CD4-positive, alpha-beta memory T cell (primary cell): ENCODE measurements at regions of chr1 and their contacts with region 1.

Region 1: DNA sequence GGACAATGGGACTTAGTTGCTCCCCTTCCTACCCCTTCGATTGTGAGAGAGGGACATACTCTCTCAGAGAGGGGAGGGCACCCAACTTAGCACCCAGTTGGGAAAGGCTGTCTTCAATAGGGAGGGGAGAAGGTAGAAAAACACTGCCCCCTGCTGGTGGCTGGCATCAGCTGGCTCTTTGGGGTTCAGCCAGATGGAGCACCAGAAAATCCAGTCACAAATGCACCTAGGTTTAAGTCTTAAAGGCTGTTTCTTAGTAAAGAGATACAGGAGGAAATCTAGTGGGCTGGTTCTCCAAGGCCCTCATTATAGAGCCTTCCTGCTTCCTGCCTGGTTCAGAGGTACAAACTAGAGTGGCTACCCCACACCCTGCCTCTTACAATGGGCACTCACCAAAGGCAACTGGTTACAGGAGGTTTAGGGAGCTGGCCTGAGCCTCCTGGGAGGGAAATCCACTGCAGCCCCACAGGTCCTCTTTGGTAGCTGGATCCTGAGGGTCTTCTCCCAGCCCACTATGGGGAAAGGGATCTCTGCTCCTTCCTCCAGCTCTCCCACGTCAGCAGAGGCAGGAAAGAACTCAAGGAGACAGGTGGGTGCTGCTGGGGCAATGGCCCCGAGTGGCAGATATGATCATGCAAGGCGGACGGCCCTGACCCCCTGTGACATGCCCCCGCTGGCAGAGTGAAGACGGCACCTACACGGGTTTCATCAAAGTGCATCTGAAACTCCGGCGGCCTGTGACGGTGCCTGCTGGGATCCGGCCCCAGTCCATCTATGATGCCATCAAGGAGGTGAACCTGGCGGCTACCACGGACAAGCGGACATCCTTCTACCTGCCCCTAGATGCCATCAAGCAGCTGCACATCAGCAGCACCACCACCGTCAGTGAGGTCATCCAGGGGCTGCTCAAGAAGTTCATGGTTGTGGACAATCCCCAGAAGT is 28.3 kb downstream of the EIF2D start:
- DNase-seq: peak; percentile 78 to 86 (median 82)
- H3K4me3 ChIP-seq: no peak overlapping the region
- H3K4me3 Mint-ChIP-seq: peak overlapping the region; percentile 71 to 92 (median 84)
- H3K27ac ChIP-seq: peak overlapping the region; percentile 89
- H3K27ac Mint-ChIP-seq: peak overlapping the region; percentile 93 to 99 (median 97)
- H3K4me1 ChIP-seq: peaks cover 68% of the 10 kb centered on the region
- H3K4me1 Mint-ChIP-seq: peaks cover 52 to 78% (median 59%) of the 10 kb centered on the region in 4 donors
- H3K27me3 ChIP-seq: no peaks in the 10 kb centered on the region
- H3K27me3 Mint-ChIP-seq: no peaks in the 10 kb centered on the region

Region 2: GRCh38 chr1:206461602-206462455 is 122.1 kb before region 1 on chr1:
- CTCF ChIA-PET with region 1: interaction called, 15 read pairs
- POLR2A ChIA-PET with region 1: interaction called, 4 read pairs
- intact Hi-C with region 1: loop called (anchors 1 kb)
- DNase-seq: peak; percentile 62 to 72 (median 65)
- H3K4me3 ChIP-seq: no peak overlapping the region
- H3K4me3 Mint-ChIP-seq: no peak overlapping the region
- H3K27ac ChIP-seq: no peak overlapping the region
- H3K27ac Mint-ChIP-seq: peak overlapping the region in 4 of 7 donors; percentile 13 to 77 (median 16)
- H3K4me1 ChIP-seq: peaks cover 36% of the 10 kb centered on the region
- H3K4me1 Mint-ChIP-seq: peaks cover 21 to 49% (median 36%) of the 10 kb centered on the region in 4 donors
- H3K27me3 ChIP-seq: no peaks in the 10 kb centered on the region
- H3K27me3 Mint-ChIP-seq: no peaks in the 10 kb centered on the region

Region 3: DNA sequence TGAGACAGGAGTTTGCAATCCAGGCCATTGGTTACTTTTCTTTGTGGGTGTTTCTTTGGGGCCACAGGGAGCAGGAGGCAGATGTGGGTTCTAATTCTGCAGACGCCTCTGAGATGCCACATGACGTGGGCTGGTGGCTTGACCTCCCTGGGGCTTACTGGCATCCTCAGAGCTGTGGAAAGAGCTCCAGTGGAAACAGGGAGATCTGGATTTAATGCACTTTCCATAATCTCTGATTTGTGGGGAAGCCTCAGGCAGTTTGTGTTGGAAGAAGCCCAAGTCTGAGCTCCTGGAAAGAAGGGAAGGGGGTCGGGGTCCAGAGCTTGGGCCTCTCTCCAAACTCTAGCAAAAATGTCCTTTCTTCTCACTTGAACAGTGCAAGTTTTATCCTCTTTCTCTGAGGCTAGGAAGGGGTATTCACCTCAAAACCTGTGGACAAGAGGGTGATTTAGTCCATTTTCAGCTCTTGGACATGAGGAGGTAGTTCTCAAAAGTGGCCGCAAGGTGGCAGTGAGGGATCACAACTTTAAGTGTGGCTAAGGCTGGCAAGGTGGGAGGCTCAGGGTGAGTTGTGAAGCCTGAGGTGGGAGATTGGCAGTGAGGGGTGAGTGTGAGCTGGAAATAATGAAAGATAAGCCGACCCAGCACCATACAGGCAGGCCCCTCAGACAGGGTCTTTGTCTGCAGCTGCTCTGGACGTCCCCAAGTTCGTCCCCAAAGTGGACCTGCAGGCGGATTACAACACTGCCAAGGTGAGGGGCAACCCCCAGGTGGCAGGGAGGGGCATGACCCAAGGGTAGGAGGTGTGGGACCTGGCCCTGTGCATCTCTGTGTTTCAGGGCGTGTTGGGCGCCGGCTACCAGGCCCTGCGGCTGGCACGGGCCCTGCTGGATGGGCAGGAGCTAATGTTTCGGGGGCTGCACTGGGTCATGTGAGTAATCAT is 104.5 kb before region 1 on chr1:
- CTCF ChIA-PET with region 1: interaction called, 17 read pairs
- POLR2A ChIA-PET with region 1: interaction called, 5 read pairs
- intact Hi-C with region 1: no loop called
- DNase-seq: peak; percentile 46 to 67 (median 52)
- H3K4me3 ChIP-seq: no peak overlapping the region
- H3K4me3 Mint-ChIP-seq: no peak overlapping the region
- H3K27ac ChIP-seq: no peak overlapping the region
- H3K27ac Mint-ChIP-seq: peak overlapping the region in 5 of 7 donors; percentile 8 to 80 (median 78)
- H3K4me1 ChIP-seq: peaks cover 21% of the 10 kb centered on the region
- H3K4me1 Mint-ChIP-seq: peaks cover 5 to 18% (median 12%) of the 10 kb centered on the region in 4 donors
- H3K27me3 ChIP-seq: no peaks in the 10 kb centered on the region
- H3K27me3 Mint-ChIP-seq: no peaks in the 10 kb centered on the region

Region 4: DNA sequence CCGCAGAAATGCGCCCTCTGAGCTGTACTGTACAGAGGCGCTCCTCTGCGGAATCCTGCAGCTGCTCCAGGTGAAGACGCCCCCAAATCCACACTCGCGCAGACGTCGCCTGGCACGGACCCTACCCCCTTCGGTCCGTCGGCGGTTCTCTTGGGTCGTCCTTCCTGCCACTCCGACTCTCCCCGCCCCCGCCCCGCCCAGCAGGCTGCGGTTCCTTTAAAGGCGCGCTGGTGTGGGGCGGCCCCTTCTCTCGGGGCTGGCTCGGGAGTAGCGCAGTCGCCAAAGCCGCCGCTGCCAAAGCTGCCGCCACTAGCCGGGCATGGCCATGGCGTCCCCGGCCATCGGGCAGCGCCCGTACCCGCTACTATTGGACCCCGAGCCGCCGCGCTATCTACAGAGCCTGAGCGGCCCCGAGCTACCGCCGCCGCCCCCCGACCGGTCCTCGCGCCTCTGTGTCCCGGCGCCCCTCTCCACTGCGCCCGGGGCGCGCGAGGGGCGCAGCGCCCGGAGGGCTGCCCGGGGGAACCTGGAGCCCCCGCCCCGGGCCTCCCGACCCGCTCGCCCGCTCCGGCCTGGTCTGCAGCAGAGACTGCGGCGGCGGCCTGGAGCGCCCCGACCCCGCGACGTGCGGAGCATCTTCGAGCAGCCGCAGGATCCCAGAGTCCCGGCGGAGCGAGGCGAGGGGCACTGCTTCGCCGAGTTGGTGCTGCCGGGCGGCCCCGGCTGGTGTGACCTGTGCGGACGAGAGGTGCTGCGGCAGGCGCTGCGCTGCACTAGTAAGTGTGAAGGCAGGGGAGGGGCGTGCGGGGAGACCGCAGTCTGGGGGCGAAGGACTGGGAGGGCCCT is 76.5 kb before region 1 on chr1 and contains the start of gene RASSF5:
- CTCF ChIA-PET with region 1: interaction called, 5 read pairs
- POLR2A ChIA-PET with region 1: interaction called, 9 read pairs
- intact Hi-C with region 1: loop called (anchors 2 kb)
- DNase-seq: peak; percentile 76 to 81 (median 78)
- H3K4me3 ChIP-seq: peak within 1 kb of the TSS; percentile 39 to 58
- H3K4me3 Mint-ChIP-seq: peak within 1 kb of the TSS; percentile 80 to 89 (median 82)
- H3K27ac ChIP-seq: no peak within 1 kb of the TSS
- H3K27ac Mint-ChIP-seq: peak within 1 kb of the TSS in 4 of 7 donors; percentile 54 to 67 (median 64)
- H3K4me1 ChIP-seq: peaks cover 45% of the 10 kb centered on the region
- H3K4me1 Mint-ChIP-seq: peaks cover 17 to 55% (median 34%) of the 10 kb centered on the region in 4 donors
- H3K27me3 ChIP-seq: peaks cover 4% of the 10 kb centered on the region
- H3K27me3 Mint-ChIP-seq: peaks cover 6 to 8% of the 10 kb centered on the region in 2 donors
- total RNA-seq, gene RASSF5: 186 to 190 TPM

Region 5: GRCh38 chr1:206556750-206557635 is 27.0 kb before region 1 on chr1:
- CTCF ChIA-PET with region 1: interaction called, 228 read pairs
- POLR2A ChIA-PET with region 1: interaction called, 786 read pairs
- intact Hi-C with region 1: loop called (anchors 1 kb)
- DNase-seq: peak; percentile 87 to 93 (median 90)
- H3K4me3 ChIP-seq: peak overlapping the region; percentile 95 to 96
- H3K4me3 Mint-ChIP-seq: peak overlapping the region; percentile 90 to 99 (median 98)
- H3K27ac ChIP-seq: peak overlapping the region; percentile 77
- H3K27ac Mint-ChIP-seq: peak overlapping the region; percentile 93 to 98 (median 96)
- H3K4me1 ChIP-seq: peaks cover 76% of the 10 kb centered on the region
- H3K4me1 Mint-ChIP-seq: peaks cover 49 to 93% (median 63%) of the 10 kb centered on the region in 4 donors
- H3K27me3 ChIP-seq: no peaks in the 10 kb centered on the region
- H3K27me3 Mint-ChIP-seq: no peaks in the 10 kb centered on the region

Region 6: DNA sequence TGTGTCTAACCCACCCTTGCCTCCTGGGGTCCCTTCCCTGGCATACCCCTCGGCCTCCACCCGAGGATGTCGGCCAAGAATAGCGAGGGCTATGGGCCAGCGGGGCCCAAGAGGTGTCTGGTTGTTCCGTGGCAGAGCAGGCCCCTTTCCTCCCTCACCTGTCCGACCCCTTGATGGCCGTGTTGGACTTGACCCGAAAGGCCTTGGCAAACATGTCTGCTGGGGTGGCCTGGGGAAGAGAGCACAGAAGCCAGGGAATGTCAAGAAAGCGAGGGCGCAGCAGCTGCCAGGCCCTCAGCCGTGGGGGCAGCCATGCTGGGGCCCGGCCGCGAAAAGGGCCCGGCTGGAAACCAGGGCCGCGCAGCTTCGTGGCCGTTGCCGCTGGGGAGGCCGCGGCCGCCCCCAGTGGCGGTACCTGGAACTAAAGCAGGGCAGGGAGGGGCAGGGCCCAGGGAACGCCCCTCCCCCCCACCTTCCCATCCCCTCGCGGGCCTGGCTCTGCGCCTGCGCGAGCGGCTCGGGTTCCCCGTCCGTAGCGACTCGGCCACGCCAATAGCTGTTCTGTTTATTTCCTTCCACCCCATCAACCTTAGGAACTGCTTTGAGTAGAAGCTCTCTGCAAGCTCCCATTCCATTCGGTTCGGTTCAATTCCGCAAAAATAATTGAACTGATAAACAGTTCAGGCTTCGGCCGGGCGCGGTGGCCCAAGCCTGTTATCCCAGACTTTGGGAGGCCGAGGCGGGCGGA is 28.3 kb after region 1 on chr1 and contains the start of gene EIF2D:
- CTCF ChIA-PET with region 1: interaction called, 24 read pairs
- POLR2A ChIA-PET with region 1: interaction called, 4 read pairs
- intact Hi-C with region 1: no loop called
- DNase-seq: peak; percentile 90 to 96 (median 92)
- H3K4me3 ChIP-seq: peak within 1 kb of the TSS; percentile 62 to 77
- H3K4me3 Mint-ChIP-seq: peak within 1 kb of the TSS; percentile 91 to 95 (median 93)
- H3K27ac ChIP-seq: peak within 1 kb of the TSS; percentile 80
- H3K27ac Mint-ChIP-seq: peak within 1 kb of the TSS; percentile 87 to 98 (median 96)
- H3K4me1 ChIP-seq: peaks cover 12% of the 10 kb centered on the region
- H3K4me1 Mint-ChIP-seq: peaks cover 12 to 34% (median 21%) of the 10 kb centered on the region in 4 donors
- H3K27me3 ChIP-seq: no peaks in the 10 kb centered on the region
- H3K27me3 Mint-ChIP-seq: no peaks in the 10 kb centered on the region
- total RNA-seq, gene EIF2D: 53.5 to 54.5 TPM

Region 7: GRCh38 chr1:206753141-206753540 is 169.2 kb after region 1 on chr1:
- CTCF ChIA-PET with region 1: no interaction called
- POLR2A ChIA-PET with region 1: no interaction called
- intact Hi-C with region 1: no loop called
- DNase-seq: no peak
- H3K4me3 ChIP-seq: no peak overlapping the region
- H3K4me3 Mint-ChIP-seq: no peak overlapping the region
- H3K27ac ChIP-seq: no peak overlapping the region
- H3K27ac Mint-ChIP-seq: no peak overlapping the region
- H3K4me1 ChIP-seq: peaks cover 25% of the 10 kb centered on the region
- H3K4me1 Mint-ChIP-seq: peaks cover 18 to 37% (median 28%) of the 10 kb centered on the region in 4 donors
- H3K27me3 ChIP-seq: no peaks in the 10 kb centered on the region
- H3K27me3 Mint-ChIP-seq: no peaks in the 10 kb centered on the region